Posterior cingulate gyrus (tissue), 11 donors: ENCODE measurements at regions of chr3 and their contacts with region 1.

Region 1: DNA sequence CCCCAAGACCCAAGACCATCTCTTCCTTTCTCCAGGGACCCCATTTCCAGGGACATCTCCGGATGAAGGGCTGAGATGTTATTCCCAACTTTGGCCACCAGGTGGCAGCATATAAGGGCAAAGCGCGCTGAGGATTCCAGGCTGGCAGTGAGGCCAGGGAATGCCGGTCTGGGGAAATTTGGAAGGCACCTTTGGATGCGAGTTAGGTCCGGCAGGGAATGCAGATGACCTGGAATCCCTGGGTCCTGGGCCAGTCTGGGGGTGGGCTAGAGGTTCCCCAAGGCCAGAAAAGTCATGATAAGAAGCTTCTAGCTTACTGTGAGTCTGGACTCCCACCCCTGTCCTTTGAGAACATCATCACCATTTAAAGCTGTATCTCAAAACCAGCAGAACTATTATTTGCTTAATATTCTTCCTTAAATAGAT is 1.6 kb upstream of the CHST13 start:
- DNase-seq: peak; percentile 38 to 94 (median 70)

Region 2: DNA sequence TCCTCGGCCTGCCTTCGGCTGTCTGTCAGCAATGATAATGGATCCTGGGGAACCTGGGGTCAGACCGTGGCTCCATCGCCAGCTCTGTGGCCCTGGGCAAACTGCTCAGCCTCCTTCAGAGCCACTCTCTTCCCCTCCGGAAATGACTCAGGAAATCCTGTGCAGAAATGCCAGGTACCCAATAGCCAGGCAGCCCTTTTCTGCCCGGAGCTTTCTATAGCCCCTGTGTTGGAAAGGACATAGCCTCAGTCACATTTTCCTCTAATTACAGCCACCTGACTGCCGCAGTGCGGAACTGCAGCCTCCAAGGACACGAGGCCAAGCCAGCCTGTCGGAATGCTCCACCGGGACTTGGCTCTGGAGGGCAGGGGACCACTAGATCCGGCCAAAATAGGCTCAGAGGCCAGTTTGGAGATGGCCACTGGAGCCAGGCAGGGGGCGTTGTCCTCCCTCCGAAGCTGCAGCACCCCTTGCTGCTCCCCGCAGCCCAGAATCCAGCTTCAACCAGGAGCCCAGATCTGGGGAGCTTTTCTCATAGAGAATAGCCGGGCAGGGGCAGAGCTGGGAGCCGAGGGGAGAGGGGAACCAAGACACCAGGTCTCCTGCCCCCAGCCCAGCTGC is 35.1 kb before region 1 on chr3:
- intact Hi-C with region 1: no loop called
- DNase-seq: peak in 3 of 10 donors; percentile 72 to 79 (median 79)

Region 3: DNA sequence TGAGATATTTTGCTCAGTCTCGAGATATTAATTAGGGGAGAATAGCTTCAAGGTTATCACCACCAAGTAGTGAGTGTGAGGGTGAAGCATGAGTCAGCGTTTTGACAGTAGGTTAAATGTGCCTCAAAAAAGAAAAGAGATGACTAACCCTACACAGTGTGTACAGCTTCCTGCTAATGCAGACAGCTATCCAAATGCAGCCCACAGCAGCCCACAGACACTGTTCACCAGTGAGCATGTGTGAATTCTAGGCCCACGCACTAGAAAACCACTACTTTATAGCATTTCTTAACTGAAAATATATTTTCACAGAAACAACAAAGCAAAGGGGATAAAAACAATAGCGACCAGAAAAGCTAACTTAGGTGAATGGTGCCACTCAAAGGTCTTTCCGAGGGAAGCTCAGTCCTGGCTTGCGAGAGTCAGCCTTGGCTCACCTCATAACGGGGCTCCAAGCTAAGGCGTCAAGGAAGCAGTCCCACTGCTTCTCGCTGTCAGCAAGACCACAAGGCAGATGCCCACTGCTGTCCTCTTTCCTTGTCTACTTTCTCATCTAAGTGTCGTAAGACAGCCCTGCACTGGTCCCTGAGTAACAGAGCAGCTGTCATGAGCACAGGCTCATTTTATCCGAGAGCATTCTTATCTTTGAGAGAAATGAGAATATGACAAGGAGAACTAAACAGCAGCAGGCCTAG is 85.0 kb after region 1 on chr3:
- intact Hi-C with region 1: loop called (anchors 5 kb)
- DNase-seq: peak in 7 of 10 donors; percentile 6 to 88 (median 33)

Region 4: DNA sequence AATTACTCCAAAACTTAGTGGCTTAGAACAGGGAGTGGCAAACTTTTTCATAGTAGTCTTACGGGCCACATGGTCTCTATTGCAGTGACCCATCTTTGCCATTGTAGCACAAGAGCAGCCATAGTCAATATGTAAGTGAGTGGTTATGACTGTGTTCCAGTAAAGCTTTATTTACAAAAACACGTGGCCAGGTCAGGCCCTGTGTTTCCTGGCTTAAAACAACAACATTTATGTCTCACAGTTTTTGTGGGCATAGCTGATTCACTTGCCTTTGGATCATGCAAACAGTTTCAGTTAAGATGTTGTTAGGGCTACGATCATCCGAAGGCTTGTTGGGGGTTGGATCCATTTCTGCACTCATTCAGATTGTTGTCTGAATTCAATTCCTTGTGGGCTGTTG is 285.4 kb after region 1 on chr3:
- intact Hi-C with region 1: no loop called
- DNase-seq: no peak

Region 5: GRCh38 chr3:126835898-126836860 is 313.8 kb after region 1 on chr3:
- intact Hi-C with region 1: no loop called
- DNase-seq: peak in 1 of 10 donors; percentile 77

Region 6: GRCh38 chr3:126982471-126983175 is 460.2 kb after region 1 on chr3 and contains the start of gene PLXNA1:
- intact Hi-C with region 1: loop called (anchors 5 kb)
- DNase-seq: peak in 9 of 10 donors; percentile 35 to 96 (median 67)

Region 7: DNA sequence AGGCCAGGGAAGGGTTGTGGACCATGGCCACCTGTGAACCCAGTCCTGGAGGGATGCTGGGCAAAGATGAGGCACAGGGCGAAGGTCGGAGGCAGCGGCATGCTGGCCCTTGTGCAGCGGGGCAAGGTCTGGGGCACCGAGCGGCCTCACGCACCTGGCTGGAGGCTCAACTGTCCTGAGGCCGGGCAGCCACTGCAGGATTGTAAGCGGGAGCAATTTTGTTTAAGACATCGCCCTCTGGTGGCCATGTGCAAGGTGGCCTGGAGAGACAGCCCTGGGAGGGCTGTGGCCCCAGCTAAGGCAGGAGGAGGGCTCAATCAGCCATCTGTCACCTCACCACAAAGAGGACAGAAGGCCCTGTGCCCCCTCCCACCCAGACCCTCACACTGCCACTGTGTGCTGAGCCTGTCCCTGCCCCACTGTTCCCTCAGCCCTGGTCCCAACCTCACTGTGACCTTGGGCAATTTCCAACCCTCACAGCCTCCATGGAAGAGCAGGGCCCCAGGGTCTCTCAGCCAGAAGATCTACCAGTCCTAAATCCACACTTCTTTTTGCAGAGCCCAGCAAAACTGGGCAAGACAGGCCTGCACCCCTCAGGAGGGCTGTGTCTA is 1021.9 kb after region 1 on chr3:
- intact Hi-C with region 1: loop called (anchors 5 kb)
- DNase-seq: peak in 8 of 10 donors; percentile 63 to 94 (median 76)